Left ventricle myocardium superior (tissue), 1 donor: ENCODE measurements at regions of chr21 and their contacts with region 1.

Region 1: DNA sequence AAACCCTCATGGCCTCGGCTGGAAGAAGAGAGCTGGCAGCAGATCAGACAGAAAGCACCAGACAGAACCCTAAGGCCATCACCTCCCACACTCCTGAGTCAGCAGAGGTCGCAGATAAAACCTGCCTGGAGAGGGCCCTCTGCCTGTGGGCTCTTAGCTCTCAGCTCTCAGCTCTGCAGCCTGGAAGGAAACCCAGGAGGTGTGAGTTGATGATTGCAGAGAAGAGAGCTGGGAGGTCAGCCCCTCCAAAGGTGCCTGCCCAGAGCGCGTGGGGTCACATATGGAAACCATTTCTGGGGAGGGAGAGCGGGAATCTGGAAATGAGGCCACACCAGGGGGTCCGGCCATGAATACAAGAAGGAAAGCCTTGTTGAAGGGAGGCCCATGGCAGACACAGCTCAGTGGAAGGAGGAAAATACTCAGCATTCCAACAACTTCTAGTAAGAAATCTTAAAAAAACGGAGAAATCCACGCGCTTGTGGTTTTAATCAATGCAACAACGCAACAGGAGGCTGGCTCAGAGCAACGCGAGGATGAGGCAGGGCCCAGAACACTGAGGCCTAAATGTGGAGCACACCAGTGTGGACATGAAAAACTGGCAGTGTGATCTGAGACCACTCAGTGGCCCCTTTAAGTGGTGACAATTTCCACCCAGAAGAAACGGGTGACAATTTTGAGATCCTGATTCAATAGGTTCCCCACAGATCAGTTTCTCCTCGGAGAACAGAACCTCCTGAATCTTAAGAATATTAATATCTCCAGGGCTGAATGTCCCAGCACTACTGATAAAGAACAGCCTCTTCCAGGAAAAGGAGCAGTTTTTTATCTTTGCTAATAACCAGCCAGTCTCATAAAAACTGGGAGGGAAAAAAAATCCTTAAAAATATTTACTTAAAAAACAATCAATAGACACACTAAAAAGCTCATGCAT is 45.7 kb downstream of the PSMG1 start:
- DNase-seq: no peak
- ATAC-seq: peak; percentile 44

Region 2: DNA sequence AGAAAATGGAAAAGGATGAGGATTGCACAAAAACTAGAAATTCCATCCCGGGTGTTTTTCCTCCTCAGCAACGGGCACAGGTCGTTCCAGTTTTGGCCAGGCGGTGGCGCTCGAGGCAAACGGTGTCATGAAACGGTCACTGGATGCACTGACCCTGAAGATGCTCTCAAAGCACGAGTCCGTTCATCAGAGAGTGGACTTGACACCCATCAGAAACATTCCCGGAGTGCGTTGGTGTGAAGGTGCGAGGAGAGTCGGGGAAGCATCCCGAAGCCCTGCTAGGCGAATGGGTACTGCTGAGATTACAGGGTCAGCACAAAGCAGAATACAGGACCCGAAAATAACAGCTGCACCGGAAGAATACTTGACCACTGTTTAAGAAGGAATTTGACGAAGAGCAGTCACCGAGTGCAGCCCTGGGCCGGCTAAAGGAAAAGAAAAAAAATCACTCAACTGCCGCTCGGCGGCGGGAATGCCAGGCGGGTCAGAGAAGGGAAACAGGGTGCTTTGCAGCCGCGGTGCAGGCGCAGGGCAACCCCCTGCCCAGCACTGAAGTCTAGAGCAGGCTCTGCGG is 403.5 kb before region 1 on chr21:
- intact Hi-C with region 1: loop called (anchors 5 kb)
- DNase-seq: peak; percentile 94
- ATAC-seq: peak; percentile 95